PC-3 (cell line): ENCODE measurements at regions of chr2 and their contacts with region 1.

Region 1: GRCh38 chr2:178414266-178415247 is 36.4 kb downstream of the PRKRA start:
- DNase-seq: peak; percentile 96
- ATAC-seq: peak; percentile 85
- H3K4me3 ChIP-seq: peak overlapping the region; percentile 70
- H3K27ac ChIP-seq: peak overlapping the region; percentile 71
- H3K4me1 ChIP-seq: peaks cover 6% of the 10 kb centered on the region; the same call in 1 of the 2 replicates
- H3K27me3 ChIP-seq: no peaks in the 10 kb centered on the region
- CTCF ChIP-seq: peak; percentile 92

Region 2: DNA sequence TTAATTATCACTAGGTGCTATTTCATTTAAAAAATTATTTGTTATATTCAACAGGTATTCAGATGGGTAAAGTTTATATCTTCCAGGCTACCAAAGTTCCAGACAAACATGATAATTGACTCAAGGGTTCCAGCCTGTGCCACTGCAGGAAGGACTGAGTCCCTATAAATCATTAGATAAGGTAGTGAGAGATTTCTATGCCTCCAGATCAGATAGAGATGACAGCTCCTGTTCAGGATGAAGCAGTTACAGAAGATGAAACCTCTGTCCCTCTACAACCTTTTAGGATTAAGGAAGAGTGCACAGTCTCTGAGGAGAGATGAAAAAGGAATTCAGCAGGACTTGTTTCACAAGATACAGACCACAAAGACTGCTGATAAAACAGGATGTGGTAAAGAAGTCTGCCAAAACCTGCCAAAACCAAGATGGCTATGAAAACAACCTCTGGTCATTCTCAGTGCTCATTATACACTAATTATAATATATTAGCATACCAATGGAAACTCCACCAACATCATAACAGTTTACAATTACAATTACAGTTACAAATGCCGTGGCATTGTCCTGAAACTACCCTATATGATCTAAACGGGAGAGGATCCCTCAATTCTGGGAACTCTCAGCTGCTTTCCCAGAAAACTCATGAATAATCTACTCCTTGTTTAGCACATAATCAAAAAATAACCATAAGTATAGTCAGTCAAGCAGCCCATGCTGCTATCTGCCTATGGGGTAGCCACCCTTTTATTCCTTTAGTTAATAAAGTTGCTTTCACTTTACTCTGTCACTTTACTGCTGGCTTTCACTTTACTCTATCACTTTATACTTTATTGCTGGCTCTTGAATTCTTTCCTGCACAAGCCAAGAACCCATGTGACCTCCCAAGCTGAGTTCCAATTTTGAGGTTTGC is 630.5 kb before region 1 on chr2:
- CTCF ChIA-PET with region 1: no interaction called
- POLR2A ChIA-PET with region 1: no interaction called
- intact Hi-C with region 1: loop called (anchors 10 kb)
- DNase-seq: peak; percentile 84
- ATAC-seq: peak; percentile 85
- H3K4me3 ChIP-seq: peak overlapping the region; percentile 33
- H3K27ac ChIP-seq: no peak overlapping the region
- H3K4me1 ChIP-seq: peaks cover 31% of the 10 kb centered on the region
- H3K27me3 ChIP-seq: no peaks in the 10 kb centered on the region
- CTCF ChIP-seq: no peak

Region 3: DNA sequence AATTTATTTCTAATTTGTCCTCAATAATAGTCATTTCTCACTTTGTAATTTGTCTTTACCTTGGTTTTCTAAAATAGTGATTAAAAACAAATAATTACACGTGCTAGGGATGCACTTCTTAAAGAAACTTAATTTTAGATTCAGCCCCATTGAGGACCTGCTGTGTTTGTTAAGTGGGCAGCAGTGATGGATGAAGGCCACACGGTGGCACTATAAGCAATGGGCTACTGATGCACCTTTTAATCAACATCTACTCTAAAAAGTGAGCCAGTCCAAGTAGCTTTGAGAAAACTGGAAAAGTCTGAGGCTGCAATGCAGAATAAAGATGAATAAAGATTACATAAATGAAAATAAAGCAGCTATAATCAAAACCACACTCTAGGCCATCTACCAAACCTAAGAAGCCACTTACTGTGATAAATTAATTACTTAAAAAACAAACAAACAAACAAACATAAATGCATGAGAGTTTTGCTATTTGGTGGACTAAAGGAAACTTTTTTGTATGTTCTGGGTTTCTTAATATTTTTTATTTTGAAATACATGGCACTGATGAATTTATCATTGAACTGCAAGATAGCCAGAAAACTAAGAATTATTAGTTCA is 431.3 kb before region 1 on chr2:
- CTCF ChIA-PET with region 1: interaction called, 6 read pairs
- POLR2A ChIA-PET with region 1: no interaction called
- intact Hi-C with region 1: loop called (anchors 5 kb)
- DNase-seq: peak; percentile 66
- ATAC-seq: peak; percentile 67
- H3K4me3 ChIP-seq: no peak overlapping the region
- H3K27ac ChIP-seq: no peak overlapping the region
- H3K4me1 ChIP-seq: no peaks in the 10 kb centered on the region
- H3K27me3 ChIP-seq: peaks cover 27% of the 10 kb centered on the region
- CTCF ChIP-seq: peak; percentile 90

Region 4: GRCh38 chr2:178128836-178129630 is 285.5 kb before region 1 on chr2:
- CTCF ChIA-PET with region 1: interaction called, 7 read pairs
- POLR2A ChIA-PET with region 1: interaction called, 4 read pairs
- intact Hi-C with region 1: loop called (anchors 1 kb)
- DNase-seq: no peak
- ATAC-seq: no peak
- H3K4me3 ChIP-seq: no peak overlapping the region
- H3K27ac ChIP-seq: no peak overlapping the region
- H3K4me1 ChIP-seq: peaks cover 8% of the 10 kb centered on the region; the same call in 1 of the 2 replicates
- H3K27me3 ChIP-seq: no peaks in the 10 kb centered on the region
- CTCF ChIP-seq: no peak

Region 5: GRCh38 chr2:178280244-178280852 is 134.2 kb before region 1 on chr2:
- CTCF ChIA-PET with region 1: no interaction called
- POLR2A ChIA-PET with region 1: no interaction called
- intact Hi-C with region 1: loop called (anchors 2 kb)
- DNase-seq: peak; percentile 80
- ATAC-seq: peak; percentile 15; the same call in 1 of the 2 replicates
- H3K4me3 ChIP-seq: no peak overlapping the region
- H3K27ac ChIP-seq: peak overlapping the region; percentile 79; the same call in 1 of the 2 replicates
- H3K4me1 ChIP-seq: peaks cover 30% of the 10 kb centered on the region
- H3K27me3 ChIP-seq: no peaks in the 10 kb centered on the region
- CTCF ChIP-seq: peak; percentile 81

Region 6: GRCh38 chr2:178397002-178397605 is 17.5 kb before region 1 on chr2:
- CTCF ChIA-PET with region 1: interaction called, 9 read pairs
- POLR2A ChIA-PET with region 1: interaction called, 4 read pairs
- intact Hi-C with region 1: loop called (anchors 1 kb)
- DNase-seq: peak; percentile 71
- ATAC-seq: peak; percentile 77
- H3K4me3 ChIP-seq: no peak overlapping the region
- H3K27ac ChIP-seq: no peak overlapping the region
- H3K4me1 ChIP-seq: peaks cover 8% of the 10 kb centered on the region; the same call in 1 of the 2 replicates
- H3K27me3 ChIP-seq: no peaks in the 10 kb centered on the region
- CTCF ChIP-seq: peak; percentile 80

Region 7: GRCh38 chr2:178457390-178457886 is 42.9 kb after region 1 on chr2:
- CTCF ChIA-PET with region 1: no interaction called
- POLR2A ChIA-PET with region 1: no interaction called
- intact Hi-C with region 1: no loop called
- DNase-seq: no peak
- ATAC-seq: no peak
- H3K4me3 ChIP-seq: no peak overlapping the region
- H3K27ac ChIP-seq: no peak overlapping the region
- H3K4me1 ChIP-seq: no peaks in the 10 kb centered on the region
- H3K27me3 ChIP-seq: no peaks in the 10 kb centered on the region
- CTCF ChIP-seq: no peak